GM12878 (cell line): ENCODE measurements at regions of chr6 and their contacts with region 1.

Region 1: GRCh38 chr6:15901141-15902115 is 227.5 kb upstream of the MYLIP start:
- DNase-seq: peak; percentile 99
- ATAC-seq: peak; percentile 90
- H3K4me3 ChIP-seq: no peak overlapping the region; the same call in 1 of the 2 replicates
- H3K27ac ChIP-seq: peak overlapping the region; percentile 96
- H3K4me1 ChIP-seq: peaks cover 60% of the 10 kb centered on the region
- H3K27me3 ChIP-seq: no peaks in the 10 kb centered on the region
- CTCF ChIP-seq: peak in 1 of 3 experiments; percentile 17; a peak in 1 of 6 replicates
- EP300 ChIP-seq: peak; percentile 97 to 99
- POLR2A ChIP-seq: no peak
- RAD21 ChIP-seq: peak; percentile 35; the same call in 1 of the 2 replicates

Region 2: DNA sequence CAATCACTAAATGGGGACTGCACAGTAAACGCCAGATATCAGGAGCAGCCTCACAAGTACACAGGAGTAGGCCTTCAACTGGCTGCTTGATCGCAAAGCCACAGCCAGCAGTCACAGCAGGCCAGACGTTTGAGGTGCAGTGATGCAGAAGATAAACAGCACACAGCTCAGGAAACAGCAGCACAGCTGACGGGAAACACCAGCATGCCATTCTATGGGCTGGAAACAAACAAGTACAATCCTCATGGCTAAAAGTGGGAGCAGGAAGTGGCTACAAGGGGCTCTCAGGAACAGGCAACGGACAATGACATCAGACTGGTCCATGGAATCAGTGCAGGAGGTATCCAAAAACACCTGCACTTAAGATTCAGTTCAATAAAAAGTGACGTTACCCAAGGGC is 349.6 kb before region 1 on chr6:
- CTCF ChIA-PET with region 1: no interaction called
- POLR2A ChIA-PET with region 1: no interaction called
- RAD21 ChIA-PET with region 1: no interaction called
- SMC1A ChIA-PET with region 1: no interaction called
- in situ Hi-C with region 1: no loop called
- intact Hi-C with region 1: no loop called
- DNase-seq: no peak
- ATAC-seq: no peak
- H3K4me3 ChIP-seq: no peak overlapping the region
- H3K27ac ChIP-seq: no peak overlapping the region
- H3K4me1 ChIP-seq: peaks cover 7% of the 10 kb centered on the region
- H3K27me3 ChIP-seq: no peaks in the 10 kb centered on the region
- CTCF ChIP-seq: no peak
- EP300 ChIP-seq: no peak
- POLR2A ChIP-seq: no peak
- RAD21 ChIP-seq: no peak

Region 3: DNA sequence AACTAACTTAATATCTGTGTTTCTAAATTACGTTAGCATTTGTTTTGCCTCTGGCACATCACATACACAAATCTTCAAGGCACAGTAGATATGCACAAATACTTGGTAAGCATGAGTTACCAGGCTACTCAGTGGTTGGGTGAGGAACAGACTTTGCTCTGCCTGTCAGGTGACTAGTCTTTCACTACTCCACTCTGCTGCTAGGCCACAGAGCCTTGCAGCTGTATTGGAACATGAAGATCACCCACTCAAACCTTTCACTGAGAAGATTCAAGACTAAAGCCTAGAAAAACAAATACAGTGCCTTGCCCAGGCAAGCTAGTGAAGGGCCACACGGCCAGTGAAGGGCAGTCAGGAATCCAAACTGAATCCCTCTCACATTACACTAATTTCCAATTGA is 285.6 kb before region 1 on chr6:
- CTCF ChIA-PET with region 1: no interaction called
- POLR2A ChIA-PET with region 1: no interaction called
- RAD21 ChIA-PET with region 1: no interaction called
- SMC1A ChIA-PET with region 1: no interaction called
- in situ Hi-C with region 1: no loop called
- intact Hi-C with region 1: no loop called
- DNase-seq: no peak
- ATAC-seq: peak; percentile 90
- H3K4me3 ChIP-seq: no peak overlapping the region
- H3K27ac ChIP-seq: peak overlapping the region; percentile 20; the same call in 1 of the 2 replicates
- H3K4me1 ChIP-seq: peaks cover 14% of the 10 kb centered on the region; the same call in 1 of the 2 replicates
- H3K27me3 ChIP-seq: no peaks in the 10 kb centered on the region
- CTCF ChIP-seq: no peak
- EP300 ChIP-seq: no peak
- POLR2A ChIP-seq: no peak
- RAD21 ChIP-seq: no peak

Region 4: GRCh38 chr6:15770347-15771143 is 130.9 kb before region 1 on chr6:
- CTCF ChIA-PET with region 1: interaction called, 28 read pairs
- POLR2A ChIA-PET with region 1: interaction called, 25 read pairs
- RAD21 ChIA-PET with region 1: interaction called, 130 read pairs
- SMC1A ChIA-PET with region 1: interaction called, 198 read pairs
- in situ Hi-C with region 1: no loop called
- intact Hi-C with region 1: no loop called
- DNase-seq: peak; percentile 62
- ATAC-seq: peak; percentile 88
- H3K4me3 ChIP-seq: no peak overlapping the region
- H3K27ac ChIP-seq: peak overlapping the region; percentile 38
- H3K4me1 ChIP-seq: peaks cover 7% of the 10 kb centered on the region
- H3K27me3 ChIP-seq: no peaks in the 10 kb centered on the region
- CTCF ChIP-seq: peak; percentile 24 to 32 (median 30); a peak in 5 of 6 replicates
- EP300 ChIP-seq: peak; percentile 32 to 76; a peak in 2 of 4 replicates
- POLR2A ChIP-seq: no peak
- RAD21 ChIP-seq: peak; percentile 44

Region 5: DNA sequence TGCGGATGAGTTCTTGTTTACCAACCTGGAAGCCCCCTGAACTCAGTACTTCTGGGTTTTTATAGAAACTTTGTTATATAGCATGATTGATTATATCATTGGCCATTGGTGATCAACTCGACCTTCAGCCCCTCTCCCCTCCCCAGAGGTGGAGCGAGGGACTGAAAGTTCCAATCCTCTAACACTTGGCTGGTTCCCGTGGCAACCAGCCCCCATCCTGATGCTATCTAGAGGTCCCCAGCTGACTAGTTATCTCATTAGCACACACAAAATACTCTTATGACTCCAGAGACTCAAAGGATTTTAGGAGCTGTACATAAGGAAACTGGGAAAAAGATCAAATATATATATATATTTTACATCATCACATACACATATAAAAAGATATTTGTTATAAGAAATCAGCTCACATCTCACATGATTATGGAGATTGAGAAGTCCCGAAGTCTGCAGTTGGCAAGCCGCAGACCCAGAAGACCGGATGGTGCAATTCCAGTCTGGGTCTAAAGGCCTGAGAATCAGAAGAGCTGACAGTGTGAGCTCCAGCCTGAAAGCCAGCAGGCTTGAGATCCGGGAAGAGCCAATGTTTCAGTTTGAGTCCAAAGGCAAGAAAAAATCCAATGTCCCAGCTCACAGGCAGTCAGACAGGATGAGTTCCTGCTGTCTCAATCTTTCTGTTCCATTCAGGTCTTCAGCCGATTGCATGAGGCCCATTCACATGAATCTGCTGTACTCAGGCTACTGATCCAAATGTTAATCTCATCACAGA is 59.3 kb before region 1 on chr6:
- CTCF ChIA-PET with region 1: no interaction called
- POLR2A ChIA-PET with region 1: interaction called, 3 read pairs
- RAD21 ChIA-PET with region 1: interaction called, 13 read pairs
- SMC1A ChIA-PET with region 1: interaction called, 9 read pairs
- in situ Hi-C with region 1: no loop called
- intact Hi-C with region 1: no loop called
- DNase-seq: no peak
- ATAC-seq: no peak
- H3K4me3 ChIP-seq: no peak overlapping the region
- H3K27ac ChIP-seq: no peak overlapping the region
- H3K4me1 ChIP-seq: peaks cover 5% of the 10 kb centered on the region; the same call in 1 of the 2 replicates
- H3K27me3 ChIP-seq: no peaks in the 10 kb centered on the region
- CTCF ChIP-seq: no peak
- EP300 ChIP-seq: no peak
- POLR2A ChIP-seq: no peak
- RAD21 ChIP-seq: no peak

Region 6: DNA sequence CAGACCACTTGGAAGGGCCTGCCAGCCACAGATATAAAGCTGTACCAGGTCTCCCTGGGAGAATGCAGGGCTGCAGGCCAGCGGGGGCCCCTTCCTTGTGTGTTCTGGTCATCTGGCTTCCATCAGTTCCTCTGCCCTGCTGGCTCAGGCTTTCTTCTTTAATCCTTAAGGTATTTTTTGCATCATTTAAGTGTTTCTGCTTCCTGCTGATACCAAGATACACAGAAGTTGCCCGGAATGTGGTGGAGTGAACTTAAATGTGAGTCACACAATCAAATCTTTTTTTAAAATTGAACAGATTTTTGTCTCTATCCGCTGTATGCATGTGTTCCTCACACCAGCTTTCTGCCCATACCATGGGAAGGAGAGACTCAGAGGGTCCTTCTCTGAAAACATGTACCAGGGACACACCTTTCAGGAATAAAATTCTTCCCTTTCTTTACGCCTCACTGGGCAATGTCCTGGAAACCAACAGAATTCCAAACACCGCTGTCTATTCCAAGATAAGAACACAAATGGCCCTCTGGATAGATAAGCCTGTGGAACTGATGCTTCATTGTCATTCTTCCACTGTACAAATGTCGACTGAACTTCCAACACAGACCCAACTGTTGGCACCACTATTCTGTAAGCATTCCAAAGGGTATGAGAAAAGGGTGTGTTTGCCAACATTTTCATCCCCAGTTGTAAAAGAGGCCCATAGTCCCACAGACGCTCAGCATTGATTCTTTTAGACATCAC is 21.3 kb after region 1 on chr6:
- CTCF ChIA-PET with region 1: no interaction called
- POLR2A ChIA-PET with region 1: interaction called, 3 read pairs
- RAD21 ChIA-PET with region 1: interaction called, 10 read pairs
- SMC1A ChIA-PET with region 1: interaction called, 8 read pairs
- in situ Hi-C with region 1: no loop called
- intact Hi-C with region 1: no loop called
- DNase-seq: no peak
- ATAC-seq: no peak
- H3K4me3 ChIP-seq: no peak overlapping the region
- H3K27ac ChIP-seq: no peak overlapping the region
- H3K4me1 ChIP-seq: no peaks in the 10 kb centered on the region
- H3K27me3 ChIP-seq: no peaks in the 10 kb centered on the region
- CTCF ChIP-seq: no peak
- EP300 ChIP-seq: no peak
- POLR2A ChIP-seq: no peak
- RAD21 ChIP-seq: no peak

Region 7: GRCh38 chr6:15987569-15987968 is 86.1 kb after region 1 on chr6:
- CTCF ChIA-PET with region 1: interaction called, 4 read pairs
- POLR2A ChIA-PET with region 1: interaction called, 7 read pairs
- RAD21 ChIA-PET with region 1: interaction called, 12 read pairs
- SMC1A ChIA-PET with region 1: interaction called, 28 read pairs
- in situ Hi-C with region 1: no loop called
- intact Hi-C with region 1: no loop called
- DNase-seq: no peak
- ATAC-seq: no peak
- H3K4me3 ChIP-seq: no peak overlapping the region
- H3K27ac ChIP-seq: no peak overlapping the region
- H3K4me1 ChIP-seq: peaks cover 17% of the 10 kb centered on the region
- H3K27me3 ChIP-seq: no peaks in the 10 kb centered on the region
- CTCF ChIP-seq: no peak
- EP300 ChIP-seq: no peak
- POLR2A ChIP-seq: no peak
- RAD21 ChIP-seq: no peak

Region 8: GRCh38 chr6:16136621-16137450 is 235.4 kb after region 1 on chr6:
- CTCF ChIA-PET with region 1: interaction called, 56 read pairs
- POLR2A ChIA-PET with region 1: interaction called, 53 read pairs
- RAD21 ChIA-PET with region 1: interaction called, 220 read pairs
- SMC1A ChIA-PET with region 1: interaction called, 184 read pairs
- in situ Hi-C with region 1: no loop called
- intact Hi-C with region 1: no loop called
- DNase-seq: no peak
- ATAC-seq: peak; percentile 53
- H3K4me3 ChIP-seq: peak overlapping the region; percentile 47; the same call in 1 of the 2 replicates
- H3K27ac ChIP-seq: no peak overlapping the region
- H3K4me1 ChIP-seq: peaks cover 6% of the 10 kb centered on the region; the same call in 1 of the 2 replicates
- H3K27me3 ChIP-seq: no peaks in the 10 kb centered on the region
- CTCF ChIP-seq: no peak
- EP300 ChIP-seq: no peak
- POLR2A ChIP-seq: no peak
- RAD21 ChIP-seq: no peak